Sigmoid colon (tissue), 7 donors: ENCODE measurements at regions of chr20 and their contacts with region 1.

Region 1: DNA sequence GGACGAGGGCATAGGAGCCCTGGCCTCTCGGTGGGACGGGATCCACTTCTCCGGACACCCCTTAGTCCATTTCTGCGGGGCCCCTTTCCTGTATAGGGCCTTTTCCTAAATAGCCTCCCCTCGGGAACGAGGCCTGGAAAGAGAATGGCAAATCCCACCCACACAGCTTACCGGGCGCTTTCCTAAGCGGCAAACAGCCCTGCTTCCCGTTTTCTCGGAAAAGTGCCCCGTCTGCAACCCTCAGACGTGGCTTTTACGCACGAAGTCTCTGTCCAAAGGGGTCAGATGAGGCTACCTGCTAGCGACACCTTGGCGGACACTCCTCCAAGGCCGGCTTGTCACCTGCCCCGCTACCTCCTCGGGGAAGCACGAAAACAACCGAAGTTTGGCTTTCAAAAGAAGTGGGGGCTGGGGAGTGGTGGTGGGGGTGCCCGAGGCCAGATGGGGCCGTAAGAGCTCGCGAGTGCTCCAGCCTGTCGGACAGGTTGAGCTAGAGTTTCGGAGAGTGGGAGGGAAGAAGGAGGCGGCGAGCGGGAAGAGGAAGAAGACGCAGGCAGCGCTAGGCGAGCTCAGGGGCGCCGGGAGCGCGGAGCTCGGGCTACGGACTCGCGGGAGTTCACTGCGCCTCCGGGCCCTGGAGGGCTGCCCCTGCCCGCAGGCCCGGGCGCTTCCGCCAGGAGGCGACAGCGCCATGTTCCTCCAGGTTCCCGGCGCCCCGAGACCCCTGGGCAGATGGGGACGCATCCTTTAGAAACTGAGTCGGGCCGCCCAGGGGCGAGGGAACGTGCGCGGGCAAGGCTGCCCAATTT is 768 bp downstream of the TFAP2C start:
- DNase-seq: peak; percentile 81
- H3K4me3 ChIP-seq: peak overlapping the region; percentile 59 to 68 (median 64)
- H3K27ac ChIP-seq: peak overlapping the region; percentile 76 to 83 (median 82)
- H3K4me1 ChIP-seq: peaks cover 0 to 67% (median 57%) of the 10 kb centered on the region in 4 donors
- H3K27me3 ChIP-seq: peaks cover 41 to 90% (median 71%) of the 10 kb centered on the region in 3 donors
- CTCF ChIP-seq: peak; percentile 47 to 74 (median 70)
- EP300 ChIP-seq: no peak
- POLR2A ChIP-seq: no peak

Region 2: GRCh38 chr20:56698749-56699148 is 68.9 kb after region 1 on chr20:
- intact Hi-C with region 1: no loop called
- DNase-seq: no peak
- H3K4me3 ChIP-seq: no peak overlapping the region
- H3K27ac ChIP-seq: no peak overlapping the region
- H3K4me1 ChIP-seq: no peaks in the 10 kb centered on the region
- H3K27me3 ChIP-seq: no peaks in the 10 kb centered on the region
- CTCF ChIP-seq: no peak
- EP300 ChIP-seq: no peak
- POLR2A ChIP-seq: no peak

Region 3: GRCh38 chr20:56781108-56781739 is 151.3 kb after region 1 on chr20:
- intact Hi-C with region 1: loop called (anchors 2 kb)
- DNase-seq: no peak
- H3K4me3 ChIP-seq: no peak overlapping the region
- H3K27ac ChIP-seq: peak overlapping the region; percentile 38 to 76 (median 65)
- H3K4me1 ChIP-seq: peaks cover 0 to 39% (median 28%) of the 10 kb centered on the region in 4 donors
- H3K27me3 ChIP-seq: no peaks in the 10 kb centered on the region
- CTCF ChIP-seq: no peak
- EP300 ChIP-seq: no peak
- POLR2A ChIP-seq: no peak

Region 4: DNA sequence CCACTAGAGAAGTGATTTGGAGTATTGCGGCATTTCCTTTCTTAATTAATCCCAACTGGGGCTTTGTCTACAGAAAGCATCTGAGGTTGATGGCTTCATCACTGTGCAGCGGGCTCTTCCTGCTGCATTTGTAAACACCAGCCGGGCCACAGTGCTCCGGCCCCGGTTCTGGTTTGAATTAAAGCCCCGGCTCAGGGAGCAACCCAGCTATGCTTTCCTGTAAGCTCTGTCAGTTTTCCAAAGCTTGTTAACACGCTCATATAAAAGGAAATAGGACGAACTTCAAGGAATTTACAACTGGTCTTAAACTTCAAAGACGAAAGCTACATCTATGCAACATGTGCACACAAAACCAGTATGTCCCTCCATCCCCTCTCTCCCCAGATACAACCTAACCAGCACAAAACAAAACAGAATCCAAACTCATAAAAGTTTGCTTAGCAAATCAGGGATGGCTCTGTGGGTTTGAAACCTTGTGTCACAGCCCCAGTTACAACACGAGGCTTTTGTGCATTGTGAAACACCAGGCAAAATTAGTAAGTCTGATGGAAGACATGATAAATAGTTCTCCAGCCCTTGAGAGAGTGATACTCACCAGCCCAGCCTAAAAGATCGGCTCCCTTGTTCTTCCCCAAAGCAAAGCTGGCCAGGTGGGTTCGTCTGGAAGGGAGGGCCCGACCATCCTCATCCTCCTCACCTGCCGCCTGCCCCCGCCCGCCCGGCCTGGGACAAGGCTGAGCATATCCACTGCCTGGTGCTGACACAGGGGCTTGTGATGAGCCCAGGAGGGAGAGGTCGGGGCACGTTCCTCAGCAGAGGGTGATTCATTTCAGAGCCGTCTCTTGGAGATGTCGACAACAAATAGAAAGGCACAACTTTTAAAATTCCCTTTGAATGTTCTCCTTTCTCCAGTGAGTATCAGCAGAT is 197.1 kb after region 1 on chr20:
- intact Hi-C with region 1: loop called (anchors 1 kb)
- DNase-seq: peak; percentile 83
- H3K4me3 ChIP-seq: peak overlapping the region in 2 of 4 donors; percentile 24 to 29
- H3K27ac ChIP-seq: peak overlapping the region; percentile 46 to 91 (median 85)
- H3K4me1 ChIP-seq: peaks cover 0 to 41% (median 26%) of the 10 kb centered on the region in 4 donors
- H3K27me3 ChIP-seq: no peaks in the 10 kb centered on the region
- CTCF ChIP-seq: no peak
- EP300 ChIP-seq: peak; percentile 16 to 67 (median 22)
- POLR2A ChIP-seq: no peak

Region 5: DNA sequence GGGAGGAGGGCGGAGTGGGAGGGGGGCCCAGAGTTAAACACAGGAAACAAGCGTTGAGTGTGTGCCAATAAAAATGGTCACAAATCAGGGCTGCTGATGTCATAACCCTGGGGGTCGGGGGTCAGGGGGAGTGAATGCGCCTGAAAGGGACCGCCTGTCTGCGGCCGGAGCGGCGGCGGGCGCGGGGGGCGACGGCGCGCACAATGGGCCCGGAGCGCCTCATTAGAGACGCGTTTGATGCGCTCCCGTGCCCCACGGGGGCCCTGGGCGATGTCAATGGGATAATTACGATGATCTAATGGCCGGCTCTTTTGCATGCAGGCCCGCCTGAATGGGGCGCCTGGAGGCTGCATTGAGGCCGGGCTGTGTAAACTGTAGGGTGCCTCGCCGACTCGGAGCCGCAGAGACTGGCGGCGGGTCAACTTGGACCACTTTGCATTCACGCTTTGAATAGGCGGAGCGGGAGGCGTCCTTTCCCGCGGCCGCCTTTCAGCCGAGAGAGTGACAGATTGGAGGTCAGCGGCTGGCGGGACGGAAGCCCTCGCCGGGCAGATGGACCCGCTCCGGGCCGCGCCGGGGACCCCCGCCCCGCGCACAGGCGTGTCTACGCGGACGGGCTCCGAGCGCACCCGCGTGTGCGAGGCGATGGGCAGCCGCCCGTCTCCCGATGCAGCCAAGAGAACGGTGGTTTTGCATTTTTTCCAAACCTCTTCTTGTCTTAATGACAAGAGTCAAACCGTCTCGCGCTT is 295.4 kb after region 1 on chr20:
- intact Hi-C with region 1: loop called (anchors 5 kb)
- DNase-seq: peak; percentile 65
- H3K4me3 ChIP-seq: peak overlapping the region; percentile 15 to 42 (median 30)
- H3K27ac ChIP-seq: no peak overlapping the region
- H3K4me1 ChIP-seq: peaks cover 0 to 14% (median 6%) of the 10 kb centered on the region in 4 donors
- H3K27me3 ChIP-seq: peaks cover 3 to 87% (median 47%) of the 10 kb centered on the region in 3 donors
- CTCF ChIP-seq: no peak
- EP300 ChIP-seq: no peak
- POLR2A ChIP-seq: no peak

Region 6: DNA sequence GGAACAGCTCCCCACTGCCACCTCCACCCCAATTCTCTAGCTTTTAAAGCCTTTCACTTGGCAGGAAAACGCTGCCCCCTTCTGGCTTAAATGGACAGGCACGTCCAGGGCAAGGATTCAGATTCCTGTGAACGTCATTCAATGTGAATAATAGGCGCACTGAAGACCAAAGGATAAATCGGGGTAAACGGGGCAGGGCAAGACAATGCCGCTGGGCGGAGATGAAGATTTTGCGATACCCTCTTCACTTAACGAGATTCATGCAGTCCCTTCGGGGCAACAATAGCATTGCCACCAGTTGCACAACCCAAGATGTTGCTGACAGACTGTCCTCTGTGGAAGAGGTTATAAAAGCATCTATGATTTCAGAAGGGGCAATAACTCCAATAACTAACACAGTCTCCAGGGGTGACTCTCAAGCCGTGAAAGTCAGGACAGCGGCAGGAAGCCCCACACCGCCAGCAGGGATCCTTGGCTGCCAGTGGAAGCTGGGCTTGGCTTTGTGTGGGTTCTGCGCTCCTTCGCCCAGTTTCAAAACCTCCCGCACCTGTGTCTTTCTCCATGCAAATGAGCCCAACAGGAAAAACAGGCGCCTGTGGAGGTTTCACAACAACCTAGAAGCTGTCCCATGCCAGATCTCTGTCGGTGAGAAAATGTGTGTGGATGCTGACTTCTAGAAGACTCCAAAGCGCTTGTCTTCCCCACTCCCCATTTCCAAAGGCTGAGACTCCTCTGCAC is 344.8 kb after region 1 on chr20:
- intact Hi-C with region 1: loop called (anchors 5 kb)
- DNase-seq: no peak
- H3K4me3 ChIP-seq: no peak overlapping the region
- H3K27ac ChIP-seq: no peak overlapping the region
- H3K4me1 ChIP-seq: peaks cover 0 to 6% (median 3%) of the 10 kb centered on the region in 4 donors
- H3K27me3 ChIP-seq: peaks cover 0 to 45% (median 11%) of the 10 kb centered on the region in 3 donors
- CTCF ChIP-seq: peak; percentile 46 to 69 (median 56)
- EP300 ChIP-seq: no peak
- POLR2A ChIP-seq: no peak